IMR-90 (cell line): ENCODE measurements at regions of chr14 and their contacts with region 1.

Region 1: GRCh38 chr14:67704484-67705089 is 2.9 kb downstream of the RDH12 start:
- DNase-seq: peak; percentile 54
- ATAC-seq: peak; percentile 87
- H3K4me3 ChIP-seq: no peak overlapping the region
- H3K27ac ChIP-seq: no peak overlapping the region
- H3K4me1 ChIP-seq: no peaks in the 10 kb centered on the region
- H3K27me3 ChIP-seq: peaks cover 4% of the 10 kb centered on the region
- CTCF ChIP-seq: peak; percentile 83
- POLR2A ChIP-seq: no peak
- RAD21 ChIP-seq: peak; percentile 89

Region 2: GRCh38 chr14:67158566-67158965 is 546.0 kb before region 1 on chr14:
- CTCF ChIA-PET with region 1: no interaction called
- POLR2A ChIA-PET with region 1: no interaction called
- dilution Hi-C with region 1: no loop called
- in situ Hi-C with region 1: no loop called
- intact Hi-C with region 1: no loop called
- DNase-seq: no peak
- ATAC-seq: no peak
- H3K4me3 ChIP-seq: no peak overlapping the region
- H3K27ac ChIP-seq: no peak overlapping the region
- H3K4me1 ChIP-seq: peaks cover 2% of the 10 kb centered on the region; the same call in 1 of the 2 replicates
- H3K27me3 ChIP-seq: no peaks in the 10 kb centered on the region
- CTCF ChIP-seq: no peak
- POLR2A ChIP-seq: no peak
- RAD21 ChIP-seq: no peak

Region 3: GRCh38 chr14:67426983-67427606 is 277.5 kb before region 1 on chr14:
- CTCF ChIA-PET with region 1: interaction called, 3 read pairs
- POLR2A ChIA-PET with region 1: no interaction called
- dilution Hi-C with region 1: no loop called
- in situ Hi-C with region 1: loop called (anchors 25 kb)
- intact Hi-C with region 1: loop called (anchors 1 kb)
- DNase-seq: peak; percentile 76
- ATAC-seq: peak; percentile 95
- H3K4me3 ChIP-seq: no peak overlapping the region
- H3K27ac ChIP-seq: no peak overlapping the region
- H3K4me1 ChIP-seq: no peaks in the 10 kb centered on the region
- H3K27me3 ChIP-seq: peaks cover 7% of the 10 kb centered on the region; the same call in 1 of the 2 replicates
- CTCF ChIP-seq: peak; percentile 85
- POLR2A ChIP-seq: no peak
- RAD21 ChIP-seq: peak; percentile 86

Region 4: DNA sequence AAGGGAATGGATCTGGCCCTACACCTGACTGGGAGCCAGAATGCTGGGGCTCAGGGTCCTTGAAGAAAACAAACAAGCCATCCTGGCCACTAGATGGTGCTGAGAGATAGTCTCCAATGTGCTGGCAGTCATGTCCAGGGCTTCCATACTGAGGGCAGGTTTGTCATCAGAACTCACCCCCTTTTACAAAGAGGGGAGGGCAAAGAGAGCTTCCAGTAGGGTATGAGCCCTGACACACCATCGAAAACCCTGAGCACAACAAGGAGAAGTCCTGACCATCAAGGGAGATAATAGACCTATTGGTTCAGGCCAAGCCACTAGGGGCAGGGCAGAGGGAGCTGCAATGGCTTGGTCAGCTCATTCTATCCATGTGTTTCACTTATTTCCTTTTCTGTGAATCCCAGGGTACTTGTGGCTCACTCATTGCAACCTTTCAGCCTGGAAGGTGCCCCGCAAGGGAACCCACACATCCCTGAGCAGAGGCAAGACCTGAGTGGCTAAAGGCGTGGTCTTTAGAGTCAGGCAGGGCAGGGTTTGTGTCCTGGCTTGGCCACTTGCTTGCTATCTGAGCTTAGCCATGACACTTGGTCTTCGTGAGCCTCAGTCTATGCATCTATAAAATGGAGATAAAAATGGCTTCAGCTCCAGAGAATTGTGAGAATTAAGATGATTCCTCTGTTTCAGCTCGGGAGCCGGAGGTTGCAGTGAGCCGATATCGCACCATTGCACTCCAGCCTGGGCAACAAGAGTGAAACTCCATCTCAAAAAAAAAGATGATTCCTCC is 177.7 kb before region 1 on chr14:
- CTCF ChIA-PET with region 1: interaction called, 13 read pairs
- POLR2A ChIA-PET with region 1: no interaction called
- dilution Hi-C with region 1: no loop called
- in situ Hi-C with region 1: no loop called
- intact Hi-C with region 1: loop called (anchors 2 kb)
- DNase-seq: peak; percentile 45
- ATAC-seq: peak; percentile 80
- H3K4me3 ChIP-seq: no peak overlapping the region
- H3K27ac ChIP-seq: no peak overlapping the region
- H3K4me1 ChIP-seq: no peaks in the 10 kb centered on the region
- H3K27me3 ChIP-seq: peaks cover 50% of the 10 kb centered on the region
- CTCF ChIP-seq: peak; percentile 53
- POLR2A ChIP-seq: no peak
- RAD21 ChIP-seq: peak; percentile 59

Region 5: DNA sequence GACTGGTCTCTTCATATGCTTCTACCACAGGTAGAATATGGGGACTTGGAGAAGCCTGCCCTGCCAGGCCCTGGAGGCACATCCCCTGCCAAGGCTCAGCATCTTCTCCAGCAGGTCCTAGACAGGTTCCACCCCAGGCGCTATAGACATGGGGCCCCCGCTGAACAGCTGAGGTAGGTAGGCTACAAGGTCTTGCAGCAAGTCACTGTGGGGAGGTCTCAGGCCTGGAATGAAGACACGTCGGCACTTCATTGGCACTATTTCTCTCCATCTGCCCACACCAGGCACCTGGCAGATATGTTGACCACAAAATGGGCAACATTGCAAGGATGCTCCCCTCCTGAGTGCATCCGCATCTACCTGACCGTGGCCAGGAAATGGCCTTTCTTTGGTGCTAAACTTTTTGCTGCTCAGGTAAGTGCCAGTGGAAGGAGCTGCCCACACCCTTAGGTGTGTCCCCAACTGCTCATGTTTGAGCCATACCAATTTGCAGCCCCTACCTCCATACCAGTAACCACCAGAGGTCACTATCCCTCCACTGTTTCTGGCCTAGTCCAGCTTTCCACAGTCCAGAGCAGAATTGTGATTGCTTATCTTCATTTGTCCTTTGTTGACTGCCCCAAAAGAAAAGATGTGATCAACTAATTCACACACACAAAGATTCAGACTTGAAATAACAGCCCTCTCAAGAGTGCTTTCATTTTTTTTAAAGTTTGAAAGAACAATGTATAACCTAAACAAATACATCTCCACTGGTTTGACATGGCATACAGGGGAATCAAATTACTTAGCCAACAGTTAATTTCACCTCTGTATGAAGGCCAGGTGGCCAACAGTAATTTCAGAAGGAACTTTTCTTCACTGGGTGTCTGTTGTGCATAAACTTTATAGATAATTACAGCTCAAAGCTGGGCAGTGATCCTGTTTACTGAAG is 120.6 kb before region 1 on chr14:
- CTCF ChIA-PET with region 1: interaction called, 38 read pairs
- POLR2A ChIA-PET with region 1: interaction called, 5 read pairs
- dilution Hi-C with region 1: no loop called
- in situ Hi-C with region 1: loop called (anchors 5 kb)
- intact Hi-C with region 1: loop called (anchors 1 kb)
- DNase-seq: peak; percentile 52
- ATAC-seq: peak; percentile 94
- H3K4me3 ChIP-seq: no peak overlapping the region
- H3K27ac ChIP-seq: no peak overlapping the region
- H3K4me1 ChIP-seq: no peaks in the 10 kb centered on the region
- H3K27me3 ChIP-seq: peaks cover 4% of the 10 kb centered on the region; the same call in 1 of the 2 replicates
- CTCF ChIP-seq: peak; percentile 72
- POLR2A ChIP-seq: no peak
- RAD21 ChIP-seq: peak; percentile 85

Region 6: GRCh38 chr14:67619446-67620216 is 85.0 kb before region 1 on chr14 and contains the start of gene ARG2:
- CTCF ChIA-PET with region 1: interaction called, 21 read pairs
- POLR2A ChIA-PET with region 1: no interaction called
- dilution Hi-C with region 1: no loop called
- in situ Hi-C with region 1: no loop called
- intact Hi-C with region 1: loop called (anchors 1 kb)
- DNase-seq: peak; percentile 91
- ATAC-seq: peak; percentile 91
- H3K4me3 ChIP-seq: peak within 1 kb of the TSS; percentile 47
- H3K27ac ChIP-seq: no peak within 1 kb of the TSS
- H3K4me1 ChIP-seq: peaks cover 3% of the 10 kb centered on the region; the same call in 1 of the 2 replicates
- H3K27me3 ChIP-seq: peaks cover 4% of the 10 kb centered on the region
- CTCF ChIP-seq: 0 out of 2 replicates have a peak, but pooled peaks have one; percentile 7
- POLR2A ChIP-seq: peak; percentile 61; the same call in 1 of the 2 replicates
- RAD21 ChIP-seq: no peak
- total RNA-seq, gene ARG2: 2.2 and 2.5 TPM in 2 replicates

Region 7: GRCh38 chr14:67852926-67853604 is 148.5 kb after region 1 on chr14:
- CTCF ChIA-PET with region 1: no interaction called
- POLR2A ChIA-PET with region 1: no interaction called
- dilution Hi-C with region 1: no loop called
- in situ Hi-C with region 1: no loop called
- intact Hi-C with region 1: no loop called
- DNase-seq: no peak
- ATAC-seq: no peak
- H3K4me3 ChIP-seq: no peak overlapping the region
- H3K27ac ChIP-seq: no peak overlapping the region
- H3K4me1 ChIP-seq: no peaks in the 10 kb centered on the region
- H3K27me3 ChIP-seq: no peaks in the 10 kb centered on the region
- CTCF ChIP-seq: no peak
- POLR2A ChIP-seq: no peak
- RAD21 ChIP-seq: no peak